Transverse colon (tissue), 4 donors: ENCODE measurements at regions of chr5 and their contacts with region 1.

Region 1: DNA sequence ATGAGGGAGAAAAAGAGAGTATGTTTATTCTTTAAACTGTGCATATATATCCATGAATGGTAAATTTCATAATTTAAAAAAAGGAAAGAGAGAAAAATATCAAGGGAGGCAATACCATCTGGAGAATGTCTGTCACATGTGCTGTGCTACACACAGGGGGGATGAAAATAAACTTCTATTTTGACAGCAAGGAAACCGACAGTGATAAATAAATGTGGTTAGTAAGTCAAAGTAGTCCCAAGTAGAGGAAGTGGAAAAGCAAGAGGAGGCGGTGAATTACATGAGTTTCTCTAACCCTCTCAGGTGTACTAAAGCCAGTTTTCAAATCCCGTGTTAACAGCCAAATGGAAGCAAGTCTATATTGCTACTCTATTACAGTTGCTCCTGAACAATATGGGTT is 83.3 kb downstream of the ICE1 start:
- DNase-seq: no peak
- H3K4me3 ChIP-seq: no peak overlapping the region
- H3K27ac ChIP-seq: no peak overlapping the region
- H3K4me1 ChIP-seq: no peaks in the 10 kb centered on the region
- H3K27me3 ChIP-seq: no peaks in the 10 kb centered on the region
- CTCF ChIP-seq: no peak
- EP300 ChIP-seq: no peak
- POLR2A ChIP-seq: no peak

Region 2: GRCh38 chr5:5886812-5887486 is 381.1 kb after region 1 on chr5:
- in situ Hi-C with region 1: loop called in 1 of 4 experiments (anchors 10 kb)
- intact Hi-C with region 1: no loop called
- DNase-seq: peak; percentile 19
- H3K4me3 ChIP-seq: no peak overlapping the region
- H3K27ac ChIP-seq: no peak overlapping the region
- H3K4me1 ChIP-seq: no peaks in the 10 kb centered on the region
- H3K27me3 ChIP-seq: no peaks in the 10 kb centered on the region
- CTCF ChIP-seq: peak; percentile 18 to 69 (median 62)
- EP300 ChIP-seq: no peak
- POLR2A ChIP-seq: no peak